PC-9 (cell line): ENCODE measurements at regions of chr5 and their contacts with region 1.

Region 1: GRCh38 chr5:171562822-171563221 is 143.4 kb downstream of the FGF18 start:
- DNase-seq: no peak
- H3K4me3 ChIP-seq: no peak overlapping the region
- H3K27ac ChIP-seq: no peak overlapping the region
- H3K4me1 ChIP-seq: no peaks in the 10 kb centered on the region
- H3K27me3 ChIP-seq: no peaks in the 10 kb centered on the region
- CTCF ChIP-seq: no peak

Region 2: DNA sequence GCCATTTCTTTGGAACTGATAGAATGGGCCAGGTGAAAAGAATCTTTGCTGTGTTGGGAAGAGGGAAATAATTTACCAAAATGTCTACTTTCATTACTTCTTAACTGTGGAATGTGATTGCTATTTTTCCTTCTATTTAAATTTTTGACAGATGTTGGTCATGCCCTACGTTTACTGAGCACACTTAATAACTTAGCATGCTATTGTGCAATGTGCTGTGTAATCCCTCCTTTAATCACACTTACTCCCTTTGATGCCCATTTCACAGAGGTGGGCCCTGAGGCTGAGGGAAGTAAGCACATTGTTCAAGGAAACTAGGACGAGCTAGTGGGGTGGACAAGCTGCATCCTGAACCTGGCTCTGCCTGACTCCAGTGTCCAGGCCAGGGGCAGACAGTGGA is 1534.7 kb before region 1 on chr5:
- CTCF ChIA-PET with region 1: no interaction called
- POLR2A ChIA-PET with region 1: interaction called, 26 read pairs
- intact Hi-C with region 1: no loop called
- DNase-seq: no peak
- H3K4me3 ChIP-seq: no peak overlapping the region
- H3K27ac ChIP-seq: no peak overlapping the region
- H3K4me1 ChIP-seq: no peaks in the 10 kb centered on the region
- H3K27me3 ChIP-seq: no peaks in the 10 kb centered on the region
- CTCF ChIP-seq: no peak

Region 3: DNA sequence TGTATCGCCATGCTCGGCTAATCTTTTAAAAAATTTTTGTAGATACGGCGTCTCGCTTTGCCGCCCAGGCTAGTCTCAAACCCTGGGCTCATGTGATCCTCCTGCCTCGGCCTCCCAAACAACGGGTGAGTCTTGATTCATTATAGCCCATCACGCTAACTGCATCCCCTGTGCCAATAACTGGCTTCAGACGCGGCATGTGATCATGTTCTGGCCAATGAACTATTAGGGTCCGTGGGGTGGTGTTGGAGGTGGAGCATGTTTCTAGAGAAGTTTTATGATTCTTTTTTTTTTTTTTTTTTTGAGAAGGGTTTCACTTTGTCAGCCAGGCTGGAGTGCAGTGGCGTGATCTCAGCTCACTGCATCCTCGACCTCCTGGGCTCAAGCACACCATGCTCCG is 92.4 kb before region 1 on chr5:
- CTCF ChIA-PET with region 1: no interaction called
- POLR2A ChIA-PET with region 1: interaction called, 34 read pairs
- intact Hi-C with region 1: no loop called
- DNase-seq: no peak
- H3K4me3 ChIP-seq: no peak overlapping the region
- H3K27ac ChIP-seq: no peak overlapping the region
- H3K4me1 ChIP-seq: no peaks in the 10 kb centered on the region
- H3K27me3 ChIP-seq: no peaks in the 10 kb centered on the region
- CTCF ChIP-seq: no peak

Region 4: DNA sequence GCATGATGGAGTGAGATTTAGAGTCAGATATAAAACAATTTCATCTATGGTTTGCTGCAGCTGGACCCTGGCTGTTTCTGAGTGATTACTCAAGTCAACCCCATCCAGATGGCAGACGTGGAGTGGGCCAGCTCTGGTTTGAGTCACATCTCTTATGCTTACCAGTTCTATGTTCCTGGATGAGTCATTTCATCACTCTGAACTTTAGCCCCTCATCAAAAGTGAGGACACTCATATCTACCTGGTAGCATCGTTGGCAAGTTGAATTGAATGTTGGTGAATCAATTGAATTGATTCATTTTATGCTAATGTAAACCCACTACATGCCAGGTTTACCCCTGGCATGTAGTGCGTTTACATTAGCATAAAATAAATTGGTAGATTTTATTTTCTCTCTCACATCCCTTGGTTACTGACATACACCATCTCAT is 33.0 kb after region 1 on chr5:
- CTCF ChIA-PET with region 1: no interaction called
- POLR2A ChIA-PET with region 1: no interaction called
- intact Hi-C with region 1: no loop called
- DNase-seq: peak; percentile 20 to 80
- H3K4me3 ChIP-seq: no peak overlapping the region
- H3K27ac ChIP-seq: peak overlapping the region; percentile 52
- H3K4me1 ChIP-seq: peaks cover 19% of the 10 kb centered on the region
- H3K27me3 ChIP-seq: peaks cover 3% of the 10 kb centered on the region; the same call in 1 of the 2 replicates
- CTCF ChIP-seq: no peak